Psoas muscle (tissue), 8 donors: ENCODE measurements at regions of chrX and their contacts with region 1.

Region 1: GRCh38 chrX:55057675-55058249 is 17.1 kb upstream of the PAGE2B start:
- DNase-seq: no peak
- ATAC-seq: peak in 3 of 4 donors; percentile 68 to 84 (median 71)
- H3K4me3 ChIP-seq: peak overlapping the region; percentile 39
- H3K27ac ChIP-seq: no peak overlapping the region
- H3K4me1 ChIP-seq: no peaks in the 10 kb centered on the region
- H3K27me3 ChIP-seq: peaks cover 0 to 8% (median 0%) of the 10 kb centered on the region in 3 donors
- CTCF ChIP-seq: peak; percentile 78

Region 2: DNA sequence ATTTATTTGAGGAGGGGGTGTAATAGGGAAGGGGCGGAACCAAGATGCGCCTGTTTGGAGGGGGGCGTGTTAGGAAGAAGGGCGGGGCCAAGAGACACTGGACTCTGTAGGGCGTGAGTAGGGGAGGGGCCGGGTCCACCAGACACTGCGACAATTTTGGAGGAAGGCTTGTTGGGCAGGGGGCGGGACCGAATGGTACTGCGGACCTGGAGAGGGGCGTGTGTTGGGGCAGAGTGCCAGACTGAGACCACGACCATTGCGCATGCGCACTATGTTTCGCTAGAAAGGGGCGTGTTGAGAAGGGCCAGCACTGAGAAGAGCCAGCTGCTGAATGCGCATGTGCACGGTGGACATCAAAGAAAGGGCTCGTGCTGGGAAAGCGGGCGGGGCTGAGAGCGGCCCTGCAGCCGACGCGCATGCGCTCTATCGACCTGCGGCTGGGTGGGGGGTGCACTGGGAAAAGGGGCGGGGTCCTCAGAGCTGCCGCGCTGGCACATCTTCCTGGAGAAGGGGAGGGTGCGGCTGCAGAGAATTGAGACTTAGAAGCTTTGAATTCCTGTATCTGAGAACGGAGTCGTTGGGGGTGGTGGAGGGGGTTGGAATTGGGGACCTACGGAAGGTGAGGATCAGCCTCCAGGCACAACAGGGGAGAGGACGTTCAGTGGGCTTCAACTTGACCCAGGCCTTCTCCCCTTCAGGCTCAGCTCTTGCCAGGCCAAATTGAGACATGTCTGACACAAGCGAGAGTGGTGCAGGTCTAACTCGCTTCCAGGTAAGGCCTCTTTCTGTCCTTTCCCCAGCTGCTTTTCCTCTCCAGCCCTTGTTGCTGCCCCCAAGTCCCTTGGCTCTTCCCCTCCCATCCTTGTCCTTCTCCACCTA is 248.9 kb before region 1 on chrX:
- intact Hi-C with region 1: no loop called
- DNase-seq: peak; percentile 91 to 96
- ATAC-seq: peak; percentile 88 to 94 (median 92)
- H3K4me3 ChIP-seq: peak overlapping the region; percentile 82
- H3K27ac ChIP-seq: peak overlapping the region; percentile 84
- H3K4me1 ChIP-seq: peaks cover 8% of the 10 kb centered on the region
- H3K27me3 ChIP-seq: no peaks in the 10 kb centered on the region
- CTCF ChIP-seq: no peak

Region 3: GRCh38 chrX:54891573-54891972 is 166.2 kb before region 1 on chrX:
- intact Hi-C with region 1: loop called (anchors 2 to 10 kb)
- DNase-seq: no peak
- ATAC-seq: peak in 3 of 4 donors; percentile 44 to 76 (median 59)
- H3K4me3 ChIP-seq: no peak overlapping the region
- H3K27ac ChIP-seq: no peak overlapping the region
- H3K4me1 ChIP-seq: no peaks in the 10 kb centered on the region
- H3K27me3 ChIP-seq: peaks cover 0 to 7% (median 0%) of the 10 kb centered on the region in 3 donors
- CTCF ChIP-seq: peak; percentile 43

Region 4: GRCh38 chrX:55118574-55118973 is 60.8 kb after region 1 on chrX:
- intact Hi-C with region 1: no loop called
- DNase-seq: no peak
- ATAC-seq: no peak
- H3K4me3 ChIP-seq: no peak overlapping the region
- H3K27ac ChIP-seq: no peak overlapping the region
- H3K4me1 ChIP-seq: no peaks in the 10 kb centered on the region
- H3K27me3 ChIP-seq: peaks cover 0 to 22% (median 0%) of the 10 kb centered on the region in 3 donors
- CTCF ChIP-seq: no peak